Activated T-helper 2 cell treated with anti-CD3 and anti-CD28 coated beads, Interferon-gamma antibody, Interleukin-2, Interleukin-4, amounts not matched to agents 10 μg/mL and 5 μg/mL and 100 μg/mL, durations not matched to agents 14 hours and 24 hours and 36 hours (primary cell): ENCODE measurements at regions of chr1 and their contacts with region 1.

Region 1: GRCh38 chr1:77779529-77780281 is at the start of gene MIGA1:
- DNase-seq: peak; percentile 81
- H3K4me3 Mint-ChIP-seq: peak within 1 kb of the TSS; percentile 90
- H3K27ac Mint-ChIP-seq: peak within 1 kb of the TSS; percentile 77
- H3K4me1 Mint-ChIP-seq: peaks cover 26% of the 10 kb centered on the region
- H3K27me3 Mint-ChIP-seq: no peaks in the 10 kb centered on the region
- total RNA-seq, gene MIGA1: 8.4 and 9.4 TPM in 2 replicates

Region 2: GRCh38 chr1:77759071-77760028 is 20.4 kb before region 1 on chr1 and contains the start of gene USP33:
- intact Hi-C with region 1: loop called (anchors 1 kb)
- DNase-seq: peak; percentile 84
- H3K4me3 Mint-ChIP-seq: peak within 1 kb of the TSS; percentile 90
- H3K27ac Mint-ChIP-seq: peak within 1 kb of the TSS; percentile 87
- H3K4me1 Mint-ChIP-seq: peaks cover 34% of the 10 kb centered on the region
- H3K27me3 Mint-ChIP-seq: peaks cover 6% of the 10 kb centered on the region
- total RNA-seq, gene USP33: 38.4 and 39.8 TPM in 2 replicates